ENCODE measurements at regions of chr12 and their contacts with region 1.

Region 1: DNA sequence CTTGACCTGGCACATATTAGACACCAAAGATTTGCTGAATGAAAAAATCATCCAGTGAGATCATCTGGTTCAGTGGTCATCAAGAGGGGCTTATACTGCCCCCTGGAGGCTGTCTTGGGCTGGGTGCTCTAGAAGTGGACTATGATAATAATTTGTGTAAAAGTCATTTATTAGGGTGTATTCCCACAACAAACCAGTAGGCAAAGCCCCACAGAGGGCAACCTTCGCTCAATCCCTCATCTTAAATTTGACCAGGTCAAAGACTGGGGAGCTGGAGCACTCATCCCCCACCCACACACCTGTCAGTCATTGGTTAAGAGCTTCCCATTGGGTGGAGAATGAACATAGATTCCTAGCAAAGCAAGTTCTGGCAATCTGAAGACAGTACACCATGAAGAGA is 20.0 kb upstream of the FICD start:
- DNase-seq: peak; percentile 82
- ATAC-seq: peak; percentile 82
- H3K4me3 ChIP-seq: no peak overlapping the region
- H3K27ac ChIP-seq: no peak overlapping the region
- H3K4me1 ChIP-seq: no peaks in the 10 kb centered on the region
- H3K27me3 ChIP-seq: peaks cover 25% of the 10 kb centered on the region
- CTCF ChIP-seq: peak; percentile 98

Region 2: GRCh38 chr12:107917912-107918800 is 576.9 kb before region 1 on chr12:
- CTCF ChIA-PET with region 1: no interaction called
- POLR2A ChIA-PET with region 1: no interaction called
- intact Hi-C with region 1: loop called (anchors 5 kb)
- DNase-seq: peak; percentile 67
- ATAC-seq: peak; percentile 85
- H3K4me3 ChIP-seq: no peak overlapping the region
- H3K27ac ChIP-seq: no peak overlapping the region
- H3K4me1 ChIP-seq: no peaks in the 10 kb centered on the region
- H3K27me3 ChIP-seq: peaks cover 24% of the 10 kb centered on the region
- CTCF ChIP-seq: peak; percentile 84

Region 3: DNA sequence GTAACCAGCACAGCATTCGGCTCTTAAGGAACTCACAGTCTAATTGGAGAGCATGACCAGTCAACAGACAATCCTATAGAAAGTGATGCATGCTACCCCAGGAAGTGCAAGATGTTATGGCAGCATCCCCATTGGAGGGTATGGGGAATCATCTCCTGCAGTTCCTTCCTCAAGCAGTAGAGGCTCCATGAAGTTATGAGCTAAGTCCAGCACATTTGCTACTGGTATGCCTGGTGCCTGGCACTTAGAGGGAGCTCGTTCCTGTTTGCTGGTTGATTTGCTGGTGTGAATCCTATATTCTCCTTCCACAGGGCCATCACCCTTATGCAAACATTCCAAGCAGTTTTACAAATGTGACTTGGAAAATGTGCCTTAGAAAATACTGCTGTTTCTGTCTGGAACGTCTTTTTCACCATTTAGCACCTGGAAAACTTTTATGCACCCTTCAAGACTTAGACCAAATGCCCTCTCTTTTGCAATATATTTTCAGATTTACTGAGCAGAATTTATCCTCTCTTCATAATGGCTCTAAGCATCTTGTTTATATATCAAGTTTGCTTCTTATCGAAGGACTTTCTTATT is 502.1 kb before region 1 on chr12:
- CTCF ChIA-PET with region 1: interaction called, 4 read pairs
- POLR2A ChIA-PET with region 1: no interaction called
- intact Hi-C with region 1: loop called (anchors 2 kb)
- DNase-seq: peak; percentile 66
- ATAC-seq: peak; percentile 78
- H3K4me3 ChIP-seq: no peak overlapping the region
- H3K27ac ChIP-seq: no peak overlapping the region
- H3K4me1 ChIP-seq: no peaks in the 10 kb centered on the region
- H3K27me3 ChIP-seq: peaks cover 12% of the 10 kb centered on the region; the same call in 1 of the 2 replicates
- CTCF ChIP-seq: peak; percentile 69

Region 4: DNA sequence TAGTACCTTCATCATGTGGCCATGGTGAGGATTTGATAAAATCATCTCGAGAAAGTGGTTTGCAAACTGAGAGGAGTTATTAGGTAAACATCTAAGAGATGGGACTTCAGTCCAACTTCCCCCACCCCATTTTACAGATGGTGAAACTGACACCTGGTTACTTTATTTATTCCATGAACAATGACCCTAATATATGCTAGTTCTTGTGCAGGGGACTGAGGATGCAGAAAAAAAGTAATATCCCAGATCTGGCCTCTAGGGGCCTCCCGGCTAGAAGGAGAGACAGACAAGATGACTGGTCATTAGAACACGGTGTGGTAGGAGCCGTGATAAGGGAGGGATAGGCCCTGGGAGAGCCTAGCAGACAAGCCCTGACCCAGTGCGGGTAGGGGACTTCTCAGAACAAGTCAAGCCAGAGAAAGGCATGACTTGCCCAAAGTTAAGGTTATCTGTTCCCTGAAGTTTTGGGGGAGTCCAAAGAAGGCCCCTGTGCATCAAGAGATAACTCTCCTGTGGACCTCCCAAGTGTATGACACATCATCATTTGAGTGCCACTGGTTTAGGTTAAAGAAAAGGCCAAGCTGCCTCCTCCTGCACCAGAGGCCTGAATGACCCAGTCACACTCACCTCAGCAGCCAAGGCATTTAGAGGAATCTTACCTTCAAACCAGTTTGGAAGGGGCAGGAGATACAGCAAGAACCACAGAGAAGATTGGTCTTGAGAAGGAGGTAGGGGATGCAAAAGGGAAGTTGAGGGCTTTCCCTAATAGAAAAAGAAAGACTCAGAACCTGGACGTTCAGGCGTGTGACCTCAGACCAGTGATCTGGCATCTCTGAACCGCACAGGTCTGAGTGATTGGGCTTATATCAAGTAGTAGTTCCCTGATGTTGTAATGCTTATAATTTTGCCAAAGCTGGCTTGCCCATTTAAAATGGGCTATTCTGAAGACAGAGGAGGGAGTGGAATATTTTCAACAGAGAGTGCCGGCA is 157.5 kb before region 1 on chr12:
- CTCF ChIA-PET with region 1: no interaction called
- POLR2A ChIA-PET with region 1: no interaction called
- intact Hi-C with region 1: loop called (anchors 1 kb)
- DNase-seq: peak; percentile 56
- ATAC-seq: peak; percentile 88
- H3K4me3 ChIP-seq: no peak overlapping the region
- H3K27ac ChIP-seq: no peak overlapping the region
- H3K4me1 ChIP-seq: no peaks in the 10 kb centered on the region
- H3K27me3 ChIP-seq: peaks cover 47% of the 10 kb centered on the region
- CTCF ChIP-seq: peak; percentile 81